A549 (cell line): ENCODE measurements at regions of chr15 and their contacts with region 1.

Region 1: GRCh38 chr15:55775316-55775715 is 32.4 kb upstream of the PRTG start:
- DNase-seq: no peak
- ATAC-seq: peak in 1 of 2 experiments; percentile 44; a peak in 3 of 6 replicates
- H3K4me3 ChIP-seq: no peak overlapping the region
- H3K27ac ChIP-seq: no peak overlapping the region
- H3K4me1 ChIP-seq: no peaks in the 10 kb centered on the region
- CTCF ChIP-seq: no peak
- EP300 ChIP-seq: no peak
- POLR2A ChIP-seq: no peak
- RAD21 ChIP-seq: no peak

Region 2: DNA sequence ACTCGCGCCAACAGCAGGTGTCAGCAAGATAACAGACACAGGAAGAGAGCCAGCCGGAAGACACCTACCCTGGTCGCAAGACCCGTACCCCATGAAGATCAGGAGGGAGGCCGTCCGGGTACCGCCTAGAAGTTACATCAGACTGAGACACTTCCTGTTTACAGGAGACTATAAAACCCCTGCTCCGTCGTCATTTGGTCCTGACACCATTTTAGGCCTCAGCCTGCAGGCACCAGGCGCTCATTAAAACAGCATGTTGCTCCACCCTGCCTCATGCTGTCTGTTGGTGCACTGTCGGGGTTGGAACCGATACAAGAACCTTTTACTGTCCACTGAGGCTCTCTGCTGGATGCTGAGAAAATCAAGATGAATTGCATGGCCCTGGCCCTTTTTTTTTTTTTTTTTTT is 16.7 kb before region 1 on chr15:
- CTCF ChIA-PET with region 1: interaction called, 26 read pairs
- POLR2A ChIA-PET with region 1: no interaction called
- DNase-seq: no peak
- ATAC-seq: no peak
- H3K4me3 ChIP-seq: no peak overlapping the region
- H3K27ac ChIP-seq: no peak overlapping the region
- H3K4me1 ChIP-seq: no peaks in the 10 kb centered on the region
- CTCF ChIP-seq: no peak
- EP300 ChIP-seq: no peak
- POLR2A ChIP-seq: no peak
- RAD21 ChIP-seq: no peak

Region 3: DNA sequence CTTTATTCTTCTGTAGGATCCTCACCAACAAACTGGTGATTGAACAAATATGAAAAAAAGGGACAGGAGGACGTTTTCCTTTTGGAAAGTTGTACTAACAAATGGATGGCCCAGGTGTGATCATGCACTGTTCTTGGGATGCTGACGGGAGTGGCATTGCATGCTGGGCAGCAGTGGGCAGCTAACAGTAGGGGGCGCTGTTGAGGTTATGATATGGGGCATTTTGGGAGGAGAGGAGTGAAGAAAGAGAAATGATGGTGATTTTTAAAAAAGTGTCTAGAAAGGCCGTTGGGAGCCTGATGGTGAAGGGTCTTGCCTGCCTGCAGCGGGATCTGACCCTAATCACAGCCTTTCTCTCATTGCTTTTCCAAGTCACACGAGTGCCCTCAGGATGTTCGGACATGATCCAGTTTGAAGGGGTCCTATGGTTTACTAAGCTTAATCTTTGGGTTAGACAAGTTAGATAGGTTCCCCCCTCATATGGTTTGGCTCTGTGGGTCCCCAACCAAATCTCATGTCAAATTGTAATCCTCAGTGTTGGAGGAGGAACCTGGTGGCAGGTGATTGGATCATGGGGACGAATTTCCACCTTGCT is 13.8 kb after region 1 on chr15:
- CTCF ChIA-PET with region 1: interaction called, 13 read pairs
- POLR2A ChIA-PET with region 1: no interaction called
- DNase-seq: peak in 1 of 2 experiments; percentile 56
- ATAC-seq: peak; percentile 62 to 75; a peak in 5 of 6 replicates
- H3K4me3 ChIP-seq: no peak overlapping the region
- H3K27ac ChIP-seq: no peak overlapping the region
- H3K4me1 ChIP-seq: peaks cover 6% of the 10 kb centered on the region; the same call in 2 of the 3 replicates
- CTCF ChIP-seq: peak; percentile 61
- EP300 ChIP-seq: no peak
- POLR2A ChIP-seq: no peak
- RAD21 ChIP-seq: peak; percentile 37 to 50; a peak in 4 of 5 replicates